ENCODE measurements at regions of chr1 and their contacts with region 1.

Region 1: GRCh38 chr1:248873409-248873992 is 14.6 kb upstream of the ZNF692 start:
- DNase-seq: peak; percentile 92 to 96
- ATAC-seq: peak; percentile 90 to 92 (median 92)
- H3K4me3 ChIP-seq: peak overlapping the region; percentile 78
- H3K27ac ChIP-seq: peak overlapping the region; percentile 95
- H3K4me1 ChIP-seq: no peaks in the 10 kb centered on the region
- H3K27me3 ChIP-seq: no peaks in the 10 kb centered on the region
- CTCF ChIP-seq: no peak

Region 2: GRCh38 chr1:248858095-248858890 is 15.2 kb before region 1 on chr1:
- intact Hi-C with region 1: no loop called
- DNase-seq: peak; percentile 70 to 88
- ATAC-seq: peak; percentile 63 to 76 (median 68)
- H3K4me3 ChIP-seq: peak overlapping the region; percentile 76
- H3K27ac ChIP-seq: peak overlapping the region; percentile 93
- H3K4me1 ChIP-seq: peaks cover 13% of the 10 kb centered on the region
- H3K27me3 ChIP-seq: no peaks in the 10 kb centered on the region
- CTCF ChIP-seq: peak; percentile 35

Region 3: GRCh38 chr1:248884632-248885295 is 11.3 kb after region 1 on chr1:
- intact Hi-C with region 1: loop called in 1 of 2 experiments (anchors 1 kb)
- DNase-seq: no peak
- ATAC-seq: no peak
- H3K4me3 ChIP-seq: no peak overlapping the region
- H3K27ac ChIP-seq: no peak overlapping the region
- H3K4me1 ChIP-seq: no peaks in the 10 kb centered on the region
- H3K27me3 ChIP-seq: no peaks in the 10 kb centered on the region
- CTCF ChIP-seq: no peak

Region 4: DNA sequence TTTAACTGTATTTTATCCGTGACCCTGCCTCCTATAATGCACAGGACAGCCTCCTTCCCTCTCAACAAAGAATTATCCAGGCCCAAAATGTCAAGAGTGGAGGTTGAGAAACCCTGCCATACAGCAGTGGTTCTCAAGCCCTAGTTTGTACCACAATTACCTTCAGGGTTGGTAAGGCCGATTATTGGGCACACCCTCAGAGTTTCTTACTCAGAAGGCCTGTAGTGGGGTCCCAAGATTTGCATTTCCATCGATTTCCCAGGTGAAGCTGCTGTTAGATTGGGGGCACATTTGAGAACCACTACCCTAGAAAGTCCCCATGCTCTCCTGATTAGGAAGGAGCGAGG is 32.1 kb after region 1 on chr1:
- intact Hi-C with region 1: loop called in 1 of 2 experiments (anchors 2 kb)
- DNase-seq: no peak
- ATAC-seq: peak in 1 of 4 donors; percentile 3
- H3K4me3 ChIP-seq: peak overlapping the region; percentile 84
- H3K27ac ChIP-seq: peak overlapping the region; percentile 97
- H3K4me1 ChIP-seq: peaks cover 7% of the 10 kb centered on the region
- H3K27me3 ChIP-seq: no peaks in the 10 kb centered on the region
- CTCF ChIP-seq: no peak

Measured in psoas muscle (tissue), 8 donors.